Right cardiac atrium (tissue), 5 donors: ENCODE measurements at regions of chr12 and their contacts with region 1.

Region 1: DNA sequence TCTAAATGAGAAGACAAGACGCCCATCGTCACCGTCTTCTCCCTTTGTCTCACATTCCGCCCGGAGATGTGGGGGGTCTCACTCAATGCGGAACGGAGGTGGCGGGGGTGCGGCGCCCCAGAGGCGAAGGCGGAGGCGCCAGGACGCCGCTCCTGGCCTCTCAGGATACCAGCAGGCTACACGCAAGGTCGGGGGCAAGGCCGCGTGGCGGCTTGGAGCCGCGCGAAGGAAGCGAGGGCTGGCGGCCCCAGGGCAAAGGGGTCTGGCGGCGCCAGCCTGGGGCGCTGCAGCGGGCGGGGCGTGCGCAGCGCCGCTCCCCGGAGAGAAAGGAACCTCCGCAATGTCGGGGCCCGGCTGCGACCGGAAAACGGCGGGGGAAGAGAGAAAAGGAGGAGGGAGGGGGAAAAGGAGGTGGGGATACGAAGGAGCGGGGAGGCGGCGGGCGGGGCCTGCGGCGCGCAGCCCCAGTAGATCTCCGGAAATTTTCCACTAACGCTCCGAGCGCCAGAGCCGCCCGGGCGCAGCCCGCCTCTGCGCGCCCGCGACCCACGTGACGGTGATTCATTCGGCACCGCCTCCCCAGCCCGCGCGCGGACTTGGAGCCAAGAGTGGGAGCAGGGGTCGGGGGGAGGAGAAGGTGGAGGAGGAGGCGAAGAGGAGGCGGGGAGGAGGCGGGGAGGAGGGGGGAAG is 10.5 kb upstream of the SLC38A2 start:
- DNase-seq: peak; percentile 97 to 99 (median 99)
- ATAC-seq: peak; percentile 95 to 96
- H3K4me3 ChIP-seq: peak overlapping the region; percentile 60
- H3K27ac ChIP-seq: peak overlapping the region; percentile 99
- H3K4me1 ChIP-seq: peaks cover 10% of the 10 kb centered on the region
- H3K27me3 ChIP-seq: no peaks in the 10 kb centered on the region

Region 2: DNA sequence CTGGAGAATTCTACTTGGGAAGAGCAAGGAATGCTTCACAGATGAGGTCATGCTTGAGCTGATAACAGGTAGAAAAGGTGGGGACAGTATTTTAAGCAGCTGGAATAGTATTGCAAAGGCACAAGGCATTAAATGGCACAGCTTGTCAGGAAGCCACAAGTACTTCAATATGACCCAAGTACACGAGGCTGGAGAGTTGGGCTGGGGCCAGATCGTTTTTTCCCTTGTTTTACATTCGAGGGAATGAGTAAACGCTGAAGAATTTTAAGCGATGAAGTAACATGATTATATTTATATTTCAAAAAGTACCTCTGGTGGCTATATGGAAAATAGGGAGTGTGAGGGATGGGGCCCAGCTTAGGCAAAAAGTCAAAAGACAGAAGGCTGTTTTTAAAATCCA is 708.5 kb before region 1 on chr12:
- intact Hi-C with region 1: no loop called
- DNase-seq: peak in 2 of 3 donors; percentile 38 to 70
- ATAC-seq: no peak
- H3K4me3 ChIP-seq: no peak overlapping the region
- H3K27ac ChIP-seq: no peak overlapping the region
- H3K4me1 ChIP-seq: peaks cover 1% of the 10 kb centered on the region
- H3K27me3 ChIP-seq: no peaks in the 10 kb centered on the region

Region 3: GRCh38 chr12:46459861-46460545 is 76.9 kb after region 1 on chr12:
- intact Hi-C with region 1: loop called in 1 of 4 experiments (anchors 10 kb)
- DNase-seq: no peak
- ATAC-seq: peak; percentile 31 to 48
- H3K4me3 ChIP-seq: no peak overlapping the region
- H3K27ac ChIP-seq: no peak overlapping the region
- H3K4me1 ChIP-seq: peaks cover 10% of the 10 kb centered on the region
- H3K27me3 ChIP-seq: no peaks in the 10 kb centered on the region